Mammary epithelial cell (primary cell): ENCODE measurements at regions of chr11 and their contacts with region 1.

Region 1: DNA sequence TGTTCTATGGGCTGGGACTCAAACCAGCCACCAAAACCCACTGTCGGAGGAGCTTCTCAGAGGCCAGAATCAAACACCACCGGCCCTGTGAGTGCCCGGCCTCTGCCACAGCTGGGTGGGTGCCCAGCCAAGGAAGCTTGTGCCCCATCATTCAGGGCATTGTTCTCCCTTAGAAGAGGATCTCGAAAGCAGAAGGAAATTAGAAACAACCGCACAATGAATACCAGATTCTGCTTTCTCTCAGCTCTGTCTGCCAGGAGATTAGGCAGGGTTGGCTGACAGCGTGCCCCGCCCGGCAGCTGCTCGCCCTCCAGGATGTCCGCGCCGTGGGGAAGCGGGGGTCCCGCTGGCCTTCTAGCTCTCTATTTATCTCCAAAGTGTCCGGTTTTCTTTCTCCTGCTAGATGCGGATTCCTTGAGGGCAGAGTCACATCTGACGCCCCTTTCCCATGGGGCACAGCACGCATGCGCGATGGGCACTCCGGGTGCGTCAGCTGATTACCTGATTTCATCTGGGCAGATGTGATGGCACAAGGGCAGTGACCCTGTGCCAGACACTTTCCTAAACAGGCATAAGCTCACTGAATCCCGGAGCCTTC is 25.5 kb downstream of the SCGB1A1 start:
- DNase-seq: no peak
- H3K4me3 ChIP-seq: peak overlapping the region; percentile 18 to 47 (median 39)
- H3K27ac ChIP-seq: no peak overlapping the region
- H3K4me1 ChIP-seq: peaks cover 4% of the 10 kb centered on the region
- H3K27me3 ChIP-seq: no peaks in the 10 kb centered on the region
- CTCF ChIP-seq: no peak

Region 2: DNA sequence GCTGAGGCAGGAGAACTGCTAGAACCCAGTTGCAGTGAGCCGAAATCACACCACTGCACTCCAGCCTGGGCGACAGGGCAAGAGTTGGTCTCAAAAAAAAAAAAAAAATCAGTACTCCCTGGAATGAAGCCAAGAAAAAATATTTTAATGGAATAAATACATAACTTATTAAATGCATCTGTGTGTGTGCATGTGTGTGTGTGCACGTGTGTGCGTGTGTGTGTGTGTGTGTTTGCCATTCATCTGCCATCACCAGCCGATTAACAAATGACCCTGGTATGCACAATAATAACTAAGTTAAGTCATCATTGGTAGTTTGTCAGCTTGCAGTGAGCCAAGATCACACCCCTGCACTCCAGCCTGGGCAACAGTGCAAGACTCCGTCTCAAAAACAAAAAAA is 60.5 kb before region 1 on chr11:
- CTCF ChIA-PET with region 1: no interaction called
- dilution Hi-C with region 1: no loop called
- in situ Hi-C with region 1: loop called in 1 of 2 experiments (anchors 10 kb)
- intact Hi-C with region 1: no loop called
- DNase-seq: no peak
- H3K4me3 ChIP-seq: no peak overlapping the region
- H3K27ac ChIP-seq: no peak overlapping the region
- H3K4me1 ChIP-seq: no peaks in the 10 kb centered on the region
- H3K27me3 ChIP-seq: no peaks in the 10 kb centered on the region
- CTCF ChIP-seq: no peak

Region 3: GRCh38 chr11:62516736-62517371 is 72.5 kb after region 1 on chr11:
- CTCF ChIA-PET with region 1: no interaction called
- dilution Hi-C with region 1: loop called (anchors 5 kb)
- in situ Hi-C with region 1: no loop called
- intact Hi-C with region 1: no loop called
- DNase-seq: no peak
- H3K4me3 ChIP-seq: no peak overlapping the region
- H3K27ac ChIP-seq: no peak overlapping the region
- H3K4me1 ChIP-seq: no peaks in the 10 kb centered on the region
- H3K27me3 ChIP-seq: no peaks in the 10 kb centered on the region
- CTCF ChIP-seq: no peak